Activated CD8-positive, alpha-beta T cell treated with anti-CD3 and anti-CD28 coated beads for 36 hours (primary cell): ENCODE measurements at regions of chr7 and their contacts with region 1.

Region 1: GRCh38 chr7:80172387-80172786 is 37.8 kb downstream of the GNAI1 start:
- DNase-seq: no peak
- ATAC-seq: peak; percentile 49
- H3K4me3 Mint-ChIP-seq: peak overlapping the region; percentile 36
- H3K27ac Mint-ChIP-seq: no peak overlapping the region
- H3K4me1 Mint-ChIP-seq: peaks cover 32% of the 10 kb centered on the region
- H3K27me3 Mint-ChIP-seq: no peaks in the 10 kb centered on the region
- CTCF ChIP-seq: no peak

Region 2: DNA sequence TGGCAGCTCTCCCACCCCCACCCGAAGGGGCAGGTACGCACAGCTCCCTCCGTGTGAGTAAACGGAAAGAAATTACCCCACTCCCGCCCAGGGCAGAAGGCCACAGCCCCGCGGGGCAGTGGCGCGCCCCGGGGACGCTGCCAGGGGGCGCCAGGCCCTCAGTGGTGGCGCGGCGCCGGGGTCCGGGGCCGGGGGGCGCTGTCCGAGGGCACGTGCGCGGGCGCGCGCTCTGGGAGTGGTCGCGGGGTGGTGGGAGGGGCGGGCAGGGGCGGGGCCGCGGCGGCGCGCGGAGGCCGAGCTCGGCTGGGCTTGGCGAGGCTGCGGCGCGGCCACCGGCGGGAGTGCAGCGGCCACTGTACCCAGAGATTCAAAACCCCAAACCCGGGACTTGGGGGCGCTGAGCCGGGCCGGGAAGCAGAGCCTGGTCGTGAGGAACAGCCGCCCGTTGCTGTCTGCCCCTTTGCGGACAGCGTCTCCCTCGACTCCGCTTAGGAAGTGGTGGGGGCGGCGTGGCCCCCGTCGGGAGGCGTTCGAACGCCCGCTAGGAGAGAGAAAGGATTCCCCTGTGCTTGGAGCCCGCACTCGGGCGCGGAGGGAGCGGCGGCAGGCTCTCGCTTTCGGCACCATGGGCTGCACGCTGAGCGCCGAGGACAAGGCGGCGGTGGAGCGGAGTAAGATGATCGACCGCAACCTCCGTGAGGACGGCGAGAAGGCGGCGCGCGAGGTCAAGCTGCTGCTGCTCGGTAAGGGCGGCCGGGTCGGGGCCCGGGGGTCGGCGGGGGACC is 37.7 kb before region 1 on chr7 and contains the start of gene GNAI1:
- CTCF ChIA-PET with region 1: no interaction called
- POLR2A ChIA-PET with region 1: no interaction called
- intact Hi-C with region 1: loop called (anchors 5 kb)
- DNase-seq: peak; percentile 50
- ATAC-seq: peak; percentile 52
- H3K4me3 Mint-ChIP-seq: peak within 1 kb of the TSS; percentile 72
- H3K27ac Mint-ChIP-seq: peak within 1 kb of the TSS; percentile 58
- H3K4me1 Mint-ChIP-seq: peaks cover 30% of the 10 kb centered on the region
- H3K27me3 Mint-ChIP-seq: peaks cover 37% of the 10 kb centered on the region
- CTCF ChIP-seq: no peak
- total RNA-seq, gene GNAI1: 1.7 to 2.8 TPM